ENCODE measurements at regions of chr1 and their contacts with region 1.

Region 1: DNA sequence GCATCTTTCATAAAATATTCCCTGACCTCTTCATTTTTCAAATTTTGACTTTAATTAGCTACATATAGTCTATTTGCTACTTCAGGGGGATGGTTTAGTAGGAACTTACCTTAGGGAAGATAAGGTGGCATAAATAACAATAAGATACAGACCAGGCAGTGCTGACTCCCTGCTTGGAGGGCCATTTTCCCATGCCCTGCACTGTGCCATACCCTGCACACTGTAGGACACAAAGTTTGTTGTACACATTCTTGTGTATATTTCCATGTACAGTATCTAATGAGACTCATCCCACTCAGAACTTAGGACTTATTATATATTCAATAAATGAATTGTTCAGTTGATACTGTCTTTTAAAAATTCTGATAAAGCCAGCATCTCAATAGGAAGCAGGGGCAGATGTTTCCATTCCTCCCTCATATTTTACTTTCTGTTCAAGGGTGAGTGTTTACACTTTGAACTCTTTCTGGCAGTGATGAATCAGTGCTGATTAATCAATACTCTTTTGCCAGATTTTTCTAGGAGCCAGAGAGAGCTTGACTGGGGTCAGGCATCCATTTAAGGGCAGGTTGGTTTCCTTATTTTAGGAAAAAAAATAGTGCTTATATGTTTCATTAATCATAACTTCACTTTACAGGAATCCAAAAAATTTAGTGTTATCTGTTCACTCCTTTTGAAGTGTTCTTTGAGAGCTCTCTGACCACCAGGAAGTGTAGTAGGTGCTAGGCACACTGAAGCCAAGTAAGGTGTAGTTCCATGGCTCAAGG is 30.6 kb downstream of the MPZL1 start:
- DNase-seq: no peak
- H3K4me3 ChIP-seq: peak overlapping the region; percentile 57
- H3K27ac ChIP-seq: peak overlapping the region; percentile 85
- H3K4me1 ChIP-seq: peaks cover 91% of the 10 kb centered on the region
- CTCF ChIP-seq: no peak

Region 2: DNA sequence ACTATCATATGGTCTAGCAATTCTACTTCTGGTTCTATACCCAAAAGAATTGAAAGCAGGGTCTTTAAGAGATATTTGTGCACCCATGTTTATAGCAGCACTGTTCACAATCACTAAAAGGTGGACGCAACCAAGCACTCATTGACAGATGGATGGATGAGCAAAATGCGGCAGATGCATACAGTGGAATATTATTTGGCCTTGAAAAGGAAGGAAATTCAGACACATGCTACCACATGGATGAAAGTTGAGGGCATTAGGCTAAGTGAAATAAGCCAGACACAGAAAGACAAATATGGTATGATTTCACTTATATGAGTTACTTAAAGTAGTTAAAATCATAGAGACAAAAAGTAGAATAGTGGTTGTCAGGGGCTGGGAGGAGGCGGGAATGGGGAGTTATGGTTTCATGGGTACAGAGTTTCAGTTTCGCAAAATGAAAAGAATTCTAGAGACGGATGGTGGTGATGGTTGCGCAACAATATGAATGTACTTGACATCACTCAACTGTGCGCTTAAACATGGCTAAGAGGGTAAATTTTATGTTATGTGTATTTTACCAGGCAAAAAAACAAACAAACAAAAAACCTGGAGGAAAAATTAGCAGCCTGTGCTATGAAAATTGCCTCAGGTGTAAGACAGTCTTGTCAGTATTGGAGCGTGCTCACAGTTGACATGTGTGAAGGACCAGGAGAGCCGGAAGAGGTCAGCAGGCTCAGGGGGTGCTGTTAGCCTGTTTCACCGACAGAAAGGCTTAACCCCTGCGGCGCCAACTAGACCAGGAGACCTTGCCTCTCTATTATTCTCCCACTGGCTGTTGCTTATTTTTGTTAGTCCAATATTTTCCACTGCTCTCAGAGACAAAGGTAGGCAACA is 260.6 kb before region 1 on chr1:
- CTCF ChIA-PET with region 1: no interaction called
- POLR2A ChIA-PET with region 1: no interaction called
- intact Hi-C with region 1: no loop called
- DNase-seq: no peak
- H3K4me3 ChIP-seq: no peak overlapping the region
- H3K27ac ChIP-seq: no peak overlapping the region
- H3K4me1 ChIP-seq: no peaks in the 10 kb centered on the region
- CTCF ChIP-seq: no peak

Region 3: GRCh38 chr1:167715157-167715999 is 37.0 kb before region 1 on chr1:
- CTCF ChIA-PET with region 1: interaction called, 4 read pairs
- POLR2A ChIA-PET with region 1: interaction called, 10 read pairs
- intact Hi-C with region 1: no loop called
- DNase-seq: peak; percentile 94
- H3K4me3 ChIP-seq: peak overlapping the region; percentile 75
- H3K27ac ChIP-seq: peak overlapping the region; percentile 73
- H3K4me1 ChIP-seq: peaks cover 47% of the 10 kb centered on the region
- CTCF ChIP-seq: peak; percentile 94

Region 4: DNA sequence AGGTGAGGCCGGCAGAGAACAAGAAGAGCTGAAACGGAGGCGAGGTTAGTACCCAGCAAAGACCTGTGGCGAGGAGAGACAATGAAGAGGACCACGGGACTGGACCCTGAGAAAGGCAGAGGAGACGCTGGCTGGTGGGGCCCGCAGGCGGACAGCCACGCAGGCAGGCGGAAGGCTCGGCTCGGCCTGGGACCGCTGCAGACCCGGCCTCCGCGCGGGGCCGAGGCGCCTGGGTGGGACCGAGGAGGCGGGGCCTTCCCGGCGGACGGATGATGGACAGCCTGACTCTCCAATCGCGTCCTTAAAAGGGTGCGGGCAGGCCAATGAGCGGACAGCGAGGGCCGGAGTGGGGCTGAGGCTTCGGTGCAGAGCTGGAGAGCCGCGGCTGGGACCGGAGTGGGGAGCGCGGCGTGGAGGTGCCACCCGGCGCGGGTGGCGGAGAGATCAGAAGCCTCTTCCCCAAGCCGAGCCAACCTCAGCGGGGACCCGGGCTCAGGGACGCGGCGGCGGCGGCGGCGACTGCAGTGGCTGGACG is 30.7 kb before region 1 on chr1 and contains the start of gene MPZL1:
- CTCF ChIA-PET with region 1: interaction called, 4 read pairs
- POLR2A ChIA-PET with region 1: interaction called, 10 read pairs
- intact Hi-C with region 1: loop called (anchors 2 kb)
- DNase-seq: peak; percentile 95
- H3K4me3 ChIP-seq: peak within 1 kb of the TSS; percentile 94
- H3K27ac ChIP-seq: peak within 1 kb of the TSS; percentile 78
- H3K4me1 ChIP-seq: peaks cover 78% of the 10 kb centered on the region
- CTCF ChIP-seq: no peak
- total RNA-seq, gene MPZL1: 36.2 and 48.9 TPM in 2 replicates

Measured in OCI-LY7 (cell line).